ENCODE measurements at regions of chr1 and their contacts with region 1.

Region 1: DNA sequence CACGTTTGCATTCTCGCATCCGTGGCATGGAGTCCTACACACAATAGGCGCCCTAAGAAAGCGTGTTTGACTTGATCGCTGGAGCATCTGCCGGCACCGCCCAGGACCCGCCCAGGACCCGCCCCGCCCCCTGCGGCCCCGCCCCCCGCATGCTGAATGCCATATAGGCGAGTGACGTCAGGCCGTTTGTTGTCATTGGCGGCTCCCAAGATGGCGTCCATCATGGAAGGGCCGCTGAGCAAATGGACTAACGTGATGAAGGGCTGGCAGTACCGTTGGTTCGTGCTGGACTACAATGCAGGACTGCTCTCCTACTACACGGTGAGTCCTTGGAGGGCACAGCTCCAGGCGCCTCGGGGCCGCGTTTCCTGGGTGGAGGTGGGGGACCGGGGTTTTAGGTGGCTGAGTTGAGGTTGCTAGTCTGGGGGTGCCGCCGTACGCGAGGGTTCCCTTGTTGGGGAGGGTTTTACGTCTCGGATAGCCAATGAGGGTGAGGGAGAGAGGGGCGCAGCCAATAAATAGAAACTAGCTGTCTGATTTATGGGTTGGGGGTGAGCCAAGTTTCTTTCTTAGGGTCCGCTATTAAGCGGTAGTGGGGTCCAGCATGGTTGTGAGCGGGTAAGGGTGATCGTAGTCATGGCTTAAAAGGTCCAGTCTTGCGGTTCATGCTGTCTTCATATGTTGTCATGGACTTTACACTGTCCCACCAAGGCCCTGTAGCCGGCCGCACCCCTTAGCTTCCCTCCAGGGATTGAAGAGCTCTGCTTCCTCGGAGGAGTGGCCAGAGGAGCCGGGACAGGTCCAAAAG is at the start of gene OSBPL9:
- DNase-seq: peak; percentile 93 to 96
- ATAC-seq: peak; percentile 96
- H3K4me3 ChIP-seq: peak within 1 kb of the TSS; percentile 74 to 96
- H3K27ac ChIP-seq: peak within 1 kb of the TSS; percentile 8 to 97
- H3K4me1 ChIP-seq: peaks cover 2 to 12% of the 10 kb centered on the region in 2 donors
- H3K27me3 ChIP-seq: no peaks in the 10 kb centered on the region
- total RNA-seq, gene OSBPL9: 98.5 to 121 TPM

Region 2: GRCh38 chr1:51000160-51000559 is 616.9 kb before region 1 on chr1:
- intact Hi-C with region 1: no loop called
- DNase-seq: no peak
- ATAC-seq: no peak
- H3K4me3 ChIP-seq: no peak overlapping the region
- H3K27ac ChIP-seq: no peak overlapping the region
- H3K4me1 ChIP-seq: no peaks in the 10 kb centered on the region
- H3K27me3 ChIP-seq: no peaks in the 10 kb centered on the region

Region 3: GRCh38 chr1:51642739-51643142 is 25.6 kb after region 1 on chr1:
- intact Hi-C with region 1: loop called in 1 of 2 experiments (anchors 2 kb)
- DNase-seq: no peak
- ATAC-seq: peak; percentile 85
- H3K4me3 ChIP-seq: no peak overlapping the region
- H3K27ac ChIP-seq: peak overlapping the region; percentile 69 to 82
- H3K4me1 ChIP-seq: peaks cover 9 to 13% of the 10 kb centered on the region in 2 donors
- H3K27me3 ChIP-seq: no peaks in the 10 kb centered on the region

Region 4: DNA sequence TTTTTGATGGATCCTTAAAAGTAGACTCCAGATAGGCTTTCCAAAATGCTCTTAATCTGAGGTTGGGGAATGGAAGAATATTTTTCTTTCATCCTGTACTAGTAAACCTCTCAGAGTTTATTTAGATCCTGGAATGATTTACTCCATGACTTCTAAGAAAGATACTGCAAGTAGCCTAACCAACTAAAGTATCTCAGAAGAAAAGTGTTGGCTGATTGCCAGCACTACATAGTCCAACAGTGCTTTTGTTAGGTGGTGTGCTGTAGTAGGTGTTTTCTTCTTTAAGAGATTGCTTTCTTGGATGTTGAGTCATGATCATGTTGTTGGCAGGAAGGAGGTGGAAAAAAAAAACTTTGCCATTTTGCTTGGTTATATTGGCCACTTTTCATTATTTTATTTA is 119.6 kb after region 1 on chr1:
- intact Hi-C with region 1: loop called (anchors 5 to 10 kb)
- DNase-seq: no peak
- ATAC-seq: peak; percentile 76
- H3K4me3 ChIP-seq: no peak overlapping the region
- H3K27ac ChIP-seq: no peak overlapping the region
- H3K4me1 ChIP-seq: peaks cover 6 to 8% of the 10 kb centered on the region in 2 donors
- H3K27me3 ChIP-seq: no peaks in the 10 kb centered on the region